ENCODE measurements at regions of chr1 and their contacts with region 1.

Region 1: DNA sequence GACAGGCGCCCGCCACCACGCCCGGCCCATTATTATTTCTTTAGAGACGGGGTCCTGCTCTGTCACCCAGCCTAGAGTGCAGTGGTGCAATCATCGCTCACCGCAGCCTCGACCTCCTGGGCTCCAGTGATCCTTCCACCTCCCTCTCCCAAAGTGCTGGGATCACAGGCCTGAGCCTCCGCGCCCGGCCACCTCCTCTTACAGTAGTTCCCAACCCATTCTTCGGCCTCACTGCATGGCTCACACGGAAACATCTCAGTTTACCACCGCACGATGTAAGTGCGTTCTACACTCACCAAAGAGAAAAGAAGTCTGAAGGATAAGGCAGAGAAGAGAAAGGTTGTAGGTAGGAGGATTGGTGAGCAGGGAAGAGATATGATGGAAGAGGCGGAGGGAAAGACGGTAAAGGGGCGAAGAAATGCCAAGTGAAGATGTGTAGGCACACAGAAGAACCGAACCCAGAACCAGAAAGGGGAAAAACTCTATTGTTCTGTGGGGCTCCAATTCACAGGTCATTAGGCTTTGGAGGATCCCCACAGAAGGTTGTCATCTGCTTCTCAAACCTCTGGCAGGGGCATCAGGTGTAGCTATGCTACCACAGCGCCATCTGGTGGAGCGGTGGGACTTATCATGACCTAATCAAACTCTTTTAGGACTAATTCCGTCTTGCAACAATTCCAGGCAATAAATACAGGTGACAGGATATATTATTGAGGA is 504.2 kb downstream of the SMYD3 start:
- DNase-seq: peak; percentile 89
- H3K4me3 ChIP-seq: no peak overlapping the region
- H3K27ac ChIP-seq: no peak overlapping the region
- H3K4me1 ChIP-seq: peaks cover 0 to 26% (median 10%) of the 10 kb centered on the region in 4 donors
- H3K27me3 ChIP-seq: no peaks in the 10 kb centered on the region
- CTCF ChIP-seq: peak; percentile 85 to 90 (median 88)
- EP300 ChIP-seq: no peak
- POLR2A ChIP-seq: no peak

Region 2: DNA sequence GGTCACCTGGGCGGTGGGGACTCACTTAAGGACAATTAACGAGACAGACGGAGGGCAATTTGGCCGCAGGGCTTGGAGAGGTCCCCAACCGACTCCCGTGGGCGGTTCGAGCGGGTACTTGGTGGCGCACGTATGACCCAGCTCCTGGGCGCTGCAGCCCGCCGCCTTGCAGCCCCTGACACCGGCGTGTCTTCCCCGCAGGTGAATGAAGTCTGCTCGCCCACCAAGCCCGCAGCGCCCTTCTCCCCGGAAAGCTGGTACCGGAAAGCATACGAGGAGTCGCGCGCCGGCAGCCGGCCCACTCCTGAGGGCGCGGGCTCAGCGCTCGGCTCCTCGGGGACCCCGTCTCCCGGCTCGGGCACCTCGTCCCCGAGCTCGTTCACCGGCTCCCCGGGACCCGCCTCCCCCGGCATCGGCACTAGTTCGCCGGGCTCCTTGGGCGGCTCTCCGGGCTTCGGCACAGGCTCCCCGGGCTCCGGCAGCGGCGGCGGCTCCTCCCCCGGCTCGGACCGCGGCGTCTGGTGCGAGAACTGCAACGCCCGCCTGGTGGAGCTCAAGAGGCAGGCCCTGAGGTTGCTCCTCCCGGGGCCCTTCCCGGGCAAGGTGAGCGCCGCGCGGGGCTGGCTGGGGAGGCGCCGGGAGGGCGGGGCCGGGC is 846.7 kb before region 1 on chr1:
- in situ Hi-C with region 1: loop called in 3 of 4 experiments (anchors 5 to 10 kb)
- intact Hi-C with region 1: loop called (anchors 2 kb)
- DNase-seq: peak; percentile 84
- H3K4me3 ChIP-seq: peak overlapping the region; percentile 32 to 65 (median 38)
- H3K27ac ChIP-seq: no peak overlapping the region
- H3K4me1 ChIP-seq: peaks cover 27 to 42% (median 40%) of the 10 kb centered on the region in 4 donors
- H3K27me3 ChIP-seq: peaks cover 90% of the 10 kb centered on the region
- CTCF ChIP-seq: peak; percentile 57 to 82 (median 69)
- EP300 ChIP-seq: no peak
- POLR2A ChIP-seq: no peak

Region 3: DNA sequence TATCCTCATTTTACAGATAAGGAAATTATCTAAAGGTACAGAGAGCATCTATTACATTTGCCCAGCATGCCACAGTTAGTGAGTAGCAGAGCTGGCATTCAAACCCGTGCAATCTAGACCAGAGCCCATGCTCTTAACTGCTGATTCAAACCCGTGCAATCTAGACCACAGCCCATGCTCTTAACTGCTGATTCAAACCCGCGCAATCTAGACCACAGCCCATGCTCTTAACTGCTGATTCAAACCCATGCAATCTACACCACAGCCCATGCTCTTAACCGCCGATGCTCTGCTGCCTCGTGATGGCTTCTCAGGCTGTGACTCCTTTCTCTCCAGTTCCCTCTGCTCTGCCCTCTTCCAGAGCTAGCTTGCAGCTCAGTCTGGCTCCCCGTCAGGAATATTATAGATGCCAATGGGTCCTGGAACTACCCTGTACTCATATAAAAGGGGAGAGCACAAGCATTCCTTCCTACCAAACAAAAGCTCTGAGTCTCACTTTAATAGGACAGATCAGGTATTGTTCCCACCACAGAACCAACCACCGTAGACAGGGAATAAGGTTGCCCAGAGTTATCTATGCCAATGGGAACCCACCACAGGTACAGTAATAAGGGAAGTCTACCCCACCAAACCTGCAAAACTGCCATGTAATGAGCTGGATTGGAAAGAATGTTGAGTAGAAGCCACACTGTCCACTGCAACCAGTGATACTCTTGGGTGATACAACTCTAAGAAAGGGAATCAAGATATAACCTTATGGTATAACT is 425.8 kb after region 1 on chr1:
- in situ Hi-C with region 1: loop called in 1 of 4 experiments (anchors 25 kb)
- intact Hi-C with region 1: no loop called
- DNase-seq: no peak
- H3K4me3 ChIP-seq: no peak overlapping the region
- H3K27ac ChIP-seq: no peak overlapping the region
- H3K4me1 ChIP-seq: peaks cover 0 to 8% (median 0%) of the 10 kb centered on the region in 4 donors
- H3K27me3 ChIP-seq: no peaks in the 10 kb centered on the region
- CTCF ChIP-seq: no peak
- EP300 ChIP-seq: no peak
- POLR2A ChIP-seq: no peak

Region 4: DNA sequence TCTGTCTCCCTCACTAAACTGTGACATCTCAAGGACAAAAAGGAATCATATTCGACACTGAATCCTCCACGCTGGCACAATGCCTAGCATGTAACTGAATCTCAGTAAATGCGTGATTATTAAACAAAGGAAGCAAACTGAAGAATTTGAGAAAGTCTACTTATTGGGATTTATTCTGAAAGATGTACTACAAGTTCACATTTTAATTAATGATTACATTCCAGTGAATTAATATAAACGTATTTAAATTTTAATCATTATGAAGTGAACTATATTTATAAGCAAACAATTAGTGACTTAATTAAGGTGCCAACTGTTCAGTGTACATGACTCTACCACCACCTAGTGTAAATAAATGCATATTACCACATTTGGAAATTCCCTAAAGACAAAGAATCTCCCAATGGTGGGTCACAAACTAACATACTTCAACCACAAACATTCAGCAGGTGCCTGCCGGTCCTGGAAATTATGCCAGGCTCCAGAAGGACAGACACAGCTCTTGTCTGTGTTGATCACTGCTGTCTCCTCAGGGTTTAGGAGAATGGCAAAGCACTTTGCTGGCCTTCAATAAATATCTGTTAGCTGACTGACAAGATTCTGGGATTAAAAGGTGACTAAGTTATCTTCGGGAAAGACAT is 447.8 kb after region 1 on chr1:
- in situ Hi-C with region 1: loop called in 2 of 4 experiments (anchors 25 kb)
- intact Hi-C with region 1: no loop called
- DNase-seq: no peak
- H3K4me3 ChIP-seq: no peak overlapping the region
- H3K27ac ChIP-seq: no peak overlapping the region
- H3K4me1 ChIP-seq: no peaks in the 10 kb centered on the region
- H3K27me3 ChIP-seq: no peaks in the 10 kb centered on the region
- CTCF ChIP-seq: peak; percentile 38 to 56 (median 52)
- EP300 ChIP-seq: no peak
- POLR2A ChIP-seq: no peak